HCT116 (cell line): ENCODE measurements at regions of chr7 and their contacts with region 1.

Region 1: GRCh38 chr7:4479367-4480039 is 202.6 kb upstream of the FOXK1 start:
- DNase-seq: peak; percentile 73
- ATAC-seq: peak; percentile 97
- H3K4me3 ChIP-seq: no peak overlapping the region
- H3K27ac ChIP-seq: no peak overlapping the region
- H3K4me1 ChIP-seq: no peaks in the 10 kb centered on the region
- H3K27me3 ChIP-seq: peaks cover 3% of the 10 kb centered on the region; the same call in 1 of the 2 replicates
- CTCF ChIP-seq: peak; percentile 61 to 75 (median 68); a peak in 5 of 6 replicates
- POLR2A ChIP-seq: no peak
- RAD21 ChIP-seq: peak; percentile 70

Region 2: DNA sequence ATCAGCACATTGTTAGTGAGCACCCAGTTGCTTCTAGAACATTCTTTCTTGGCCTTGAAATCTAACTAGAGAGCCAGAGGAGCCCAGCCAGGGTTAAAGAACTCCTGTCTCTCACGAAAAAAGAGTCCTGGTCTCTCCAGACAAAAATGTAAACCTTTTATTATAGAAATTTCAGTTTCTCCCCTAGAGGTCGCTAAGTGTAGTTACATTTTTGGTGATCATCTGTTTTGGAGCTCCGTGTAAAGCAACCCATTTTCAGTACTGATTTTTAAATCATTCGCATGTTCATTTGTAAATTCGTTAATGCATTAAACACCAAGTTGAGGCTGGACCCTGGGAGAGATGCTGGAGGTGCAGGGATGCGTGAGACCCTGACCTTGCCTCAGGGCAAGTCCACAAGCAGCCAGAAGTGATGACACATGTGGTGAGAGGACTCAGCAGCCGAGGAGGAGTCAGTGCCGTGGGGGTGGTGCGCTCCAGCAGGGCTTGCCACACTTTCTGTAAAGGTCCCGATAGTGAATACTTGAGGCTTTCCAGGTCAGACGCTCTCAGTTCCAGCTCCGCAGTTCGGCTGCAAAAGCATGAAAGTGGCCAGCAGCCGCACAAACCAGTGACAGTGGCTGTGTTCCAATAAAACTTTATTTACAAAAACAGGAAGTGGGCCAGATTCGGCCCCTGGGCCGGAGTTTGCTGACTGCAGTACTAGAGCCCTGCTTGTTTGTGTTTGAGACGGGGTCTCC is 376.0 kb before region 1 on chr7:
- CTCF ChIA-PET with region 1: interaction called, 11 read pairs
- POLR2A ChIA-PET with region 1: no interaction called
- RAD21 ChIA-PET with region 1: no interaction called
- intact Hi-C with region 1: no loop called
- DNase-seq: peak; percentile 32
- ATAC-seq: peak; percentile 81
- H3K4me3 ChIP-seq: peak overlapping the region in 1 of 2 experiments; percentile 18; a peak in 1 of 4 replicates
- H3K27ac ChIP-seq: no peak overlapping the region
- H3K4me1 ChIP-seq: peaks cover 0 to 9% of the 10 kb centered on the region in 2 experiments; a peak in 3 of 4 replicates
- H3K27me3 ChIP-seq: no peaks in the 10 kb centered on the region
- CTCF ChIP-seq: peak; percentile 29 to 56 (median 36); a peak in 5 of 6 replicates
- POLR2A ChIP-seq: no peak
- RAD21 ChIP-seq: peak; percentile 41

Region 3: GRCh38 chr7:4226525-4226884 is 253.0 kb before region 1 on chr7:
- CTCF ChIA-PET with region 1: interaction called, 5 read pairs
- POLR2A ChIA-PET with region 1: no interaction called
- RAD21 ChIA-PET with region 1: no interaction called
- intact Hi-C with region 1: loop called (anchors 10 kb)
- DNase-seq: peak; percentile 4
- ATAC-seq: peak; percentile 71
- H3K4me3 ChIP-seq: no peak overlapping the region
- H3K27ac ChIP-seq: no peak overlapping the region
- H3K4me1 ChIP-seq: no peaks in the 10 kb centered on the region
- H3K27me3 ChIP-seq: peaks cover 6% of the 10 kb centered on the region; the same call in 1 of the 2 replicates
- CTCF ChIP-seq: peak; percentile 8 to 48 (median 45); a peak in 4 of 6 replicates
- POLR2A ChIP-seq: no peak
- RAD21 ChIP-seq: peak; percentile 50